ENCODE measurements at regions of chr22 and their contacts with region 1.

Region 1: GRCh38 chr22:49979587-49980264 is 19.2 kb downstream of the PIM3 start:
- DNase-seq: peak; percentile 53
- ATAC-seq: peak; percentile 82
- H3K4me3 Mint-ChIP-seq: no peak overlapping the region
- H3K27ac Mint-ChIP-seq: no peak overlapping the region
- H3K4me1 Mint-ChIP-seq: peaks cover 3% of the 10 kb centered on the region; the same call in 1 of the 2 replicates
- H3K27me3 Mint-ChIP-seq: peaks cover 22% of the 10 kb centered on the region
- CTCF ChIP-seq: peak; percentile 39; the same call in 1 of the 2 replicates

Region 2: GRCh38 chr22:49930739-49931412 is 48.9 kb before region 1 on chr22:
- CTCF ChIA-PET with region 1: interaction called, 12 read pairs
- POLR2A ChIA-PET with region 1: no interaction called
- DNase-seq: no peak
- ATAC-seq: no peak
- H3K4me3 Mint-ChIP-seq: no peak overlapping the region
- H3K27ac Mint-ChIP-seq: 0 out of 2 replicates have a peak overlapping the region, but pooled peaks have one; percentile 6
- H3K4me1 Mint-ChIP-seq: peaks cover 6% of the 10 kb centered on the region
- H3K27me3 Mint-ChIP-seq: peaks cover 12% of the 10 kb centered on the region; the same call in 1 of the 2 replicates
- CTCF ChIP-seq: no peak

Region 3: DNA sequence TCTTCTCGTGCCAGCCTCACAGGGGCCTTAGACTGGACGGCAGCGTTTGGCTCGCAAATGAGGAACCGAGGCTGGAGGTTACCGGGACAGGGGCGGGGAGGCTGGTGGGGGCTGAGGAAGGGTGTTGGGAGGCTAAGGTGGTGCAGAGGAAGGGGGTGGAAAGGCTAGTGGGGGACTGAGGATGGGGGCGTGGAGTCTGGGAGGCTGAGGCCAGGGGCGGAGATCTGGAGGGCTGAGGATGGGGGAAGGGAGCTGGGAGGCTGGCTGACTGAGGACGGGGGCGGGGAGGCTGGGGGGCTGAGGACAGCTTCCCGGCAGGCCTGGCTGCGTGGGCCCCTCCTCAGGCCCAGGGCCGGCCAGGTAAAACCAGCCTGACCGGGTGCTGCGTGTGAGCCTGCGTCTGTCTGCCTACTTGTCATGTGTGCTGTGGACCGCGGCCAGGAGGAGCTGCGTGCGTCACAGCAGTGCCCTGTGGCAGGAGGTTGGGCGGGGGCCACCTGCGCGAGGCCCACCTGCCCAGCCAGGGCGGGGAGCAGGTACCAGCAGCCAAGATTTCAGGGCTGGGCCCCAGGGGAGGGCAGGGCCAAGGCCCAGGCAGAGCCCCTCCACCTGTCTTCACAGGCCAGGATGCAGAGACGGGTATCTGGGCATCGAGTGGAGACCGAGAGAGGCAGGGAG is 28.6 kb before region 1 on chr22:
- CTCF ChIA-PET with region 1: interaction called, 11 read pairs
- POLR2A ChIA-PET with region 1: no interaction called
- DNase-seq: no peak
- ATAC-seq: no peak
- H3K4me3 Mint-ChIP-seq: no peak overlapping the region
- H3K27ac Mint-ChIP-seq: no peak overlapping the region
- H3K4me1 Mint-ChIP-seq: peaks cover 8% of the 10 kb centered on the region
- H3K27me3 Mint-ChIP-seq: no peaks in the 10 kb centered on the region
- CTCF ChIP-seq: no peak

Region 4: DNA sequence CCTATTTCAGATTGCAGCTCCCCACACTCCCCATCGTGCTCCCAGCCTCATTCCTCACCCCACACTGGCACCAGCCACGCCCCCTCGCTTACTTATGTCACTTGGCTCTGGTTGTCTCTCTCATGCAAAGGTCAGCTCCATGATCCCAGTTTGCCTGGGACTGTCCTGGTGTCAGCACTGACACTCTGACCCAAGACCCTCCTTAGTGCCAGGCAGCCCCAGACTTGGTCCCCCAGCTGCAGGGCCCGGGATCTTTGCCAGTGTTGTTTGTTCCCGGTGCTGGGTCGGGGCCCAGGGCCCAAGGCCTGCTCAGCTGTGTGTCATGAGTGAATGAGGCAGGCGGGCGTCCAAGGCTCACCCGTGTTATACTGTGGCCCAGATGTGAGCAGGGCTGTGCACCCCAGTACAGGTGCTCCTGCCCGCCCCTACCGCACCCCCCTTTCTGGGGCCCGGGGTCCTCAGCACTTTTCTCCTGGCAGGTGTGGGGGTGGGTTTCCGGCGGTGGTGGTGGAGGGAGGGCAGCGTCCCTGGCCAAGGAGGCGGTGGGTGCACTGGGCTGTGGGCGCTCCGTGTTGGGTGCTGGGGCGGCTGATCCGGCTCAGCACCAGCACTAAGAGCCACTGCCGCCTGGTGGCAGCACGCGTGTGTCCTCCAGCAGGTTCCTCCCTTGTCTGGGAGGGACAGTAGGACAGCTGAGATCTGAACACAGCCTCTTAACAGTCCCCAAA is 13.4 kb after region 1 on chr22:
- CTCF ChIA-PET with region 1: interaction called, 27 read pairs
- POLR2A ChIA-PET with region 1: no interaction called
- DNase-seq: peak; percentile 72
- ATAC-seq: peak; percentile 90
- H3K4me3 Mint-ChIP-seq: no peak overlapping the region
- H3K27ac Mint-ChIP-seq: no peak overlapping the region
- H3K4me1 Mint-ChIP-seq: no peaks in the 10 kb centered on the region
- H3K27me3 Mint-ChIP-seq: peaks cover 28% of the 10 kb centered on the region
- CTCF ChIP-seq: peak; percentile 55